Heart right ventricle (tissue), 16 donors: ENCODE measurements at regions of chr2 and their contacts with region 1.

Region 1: DNA sequence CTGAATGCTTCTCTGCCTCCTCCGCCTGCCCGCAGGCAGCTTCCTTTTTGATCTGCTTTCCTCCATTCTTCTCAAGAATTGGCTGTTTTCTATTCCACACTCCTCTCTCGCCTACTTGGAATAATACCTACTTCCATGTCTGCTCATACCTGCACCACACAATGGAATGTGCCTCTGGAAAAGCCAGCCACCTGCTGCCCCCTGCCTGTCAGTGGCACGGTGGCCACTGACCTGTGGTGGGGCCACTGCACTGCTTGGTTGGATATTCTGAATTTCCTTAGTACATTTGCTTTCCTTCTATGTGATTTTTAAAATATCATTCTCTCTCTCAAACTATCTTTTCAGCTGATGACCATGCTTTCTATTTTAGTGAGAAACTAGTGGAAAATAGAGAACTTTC is 406.9 kb downstream of the DCDC2C start:
- DNase-seq: no peak
- ATAC-seq: no peak
- H3K4me3 ChIP-seq: no peak overlapping the region
- H3K27ac ChIP-seq: no peak overlapping the region
- H3K4me1 ChIP-seq: no peaks in the 10 kb centered on the region
- H3K27me3 ChIP-seq: no peaks in the 10 kb centered on the region
- CTCF ChIP-seq: no peak

Region 2: DNA sequence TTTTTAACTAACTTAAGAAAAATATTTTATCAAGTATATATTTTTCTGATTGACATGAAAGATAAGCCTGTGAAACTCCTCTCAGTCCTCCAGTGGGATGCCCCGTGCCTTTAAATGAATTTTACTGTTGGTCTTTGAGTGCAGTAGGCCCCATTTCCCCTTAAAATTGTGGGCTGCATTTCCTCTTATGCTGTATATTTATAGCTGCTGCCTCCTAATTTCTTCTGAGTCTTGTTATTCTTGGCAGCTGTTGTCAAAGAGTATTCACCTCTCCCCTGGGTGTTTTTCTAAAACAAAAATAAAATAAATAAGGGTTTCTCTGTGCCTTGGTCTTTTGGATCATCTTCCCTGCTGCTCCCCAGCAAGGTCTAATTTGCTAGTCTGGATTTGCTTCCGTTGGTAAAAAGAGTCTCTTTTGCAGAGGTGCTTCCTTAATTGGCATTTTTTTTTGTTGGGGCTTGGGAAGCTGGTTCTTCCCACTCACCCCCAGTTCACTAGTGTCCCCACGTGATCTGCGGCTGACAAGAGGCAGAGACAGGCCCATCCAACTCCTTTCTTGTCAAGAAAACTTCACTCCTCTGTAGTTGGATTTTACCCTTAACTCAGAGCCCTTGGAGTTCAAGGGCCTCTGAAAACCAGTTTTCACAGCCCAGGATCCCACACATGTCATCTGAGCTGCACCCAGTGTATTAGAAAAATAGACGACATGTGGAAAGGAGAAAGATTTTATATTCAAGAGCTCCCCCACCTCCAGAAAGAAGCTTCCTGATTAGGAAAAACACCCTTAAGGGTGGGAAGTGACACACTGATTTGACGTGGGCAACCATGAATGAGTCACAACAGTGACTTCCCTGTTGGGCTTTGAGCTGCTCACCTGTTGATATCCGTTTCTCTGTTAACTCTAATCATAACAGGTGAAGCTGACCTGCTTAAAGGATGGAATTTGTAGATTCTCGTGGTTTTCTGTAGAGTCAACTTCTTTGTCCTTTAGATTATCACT is 24.6 kb after region 1 on chr2:
- intact Hi-C with region 1: loop called in 1 of 10 experiments (anchors 2 kb)
- DNase-seq: no peak
- ATAC-seq: no peak
- H3K4me3 ChIP-seq: no peak overlapping the region
- H3K27ac ChIP-seq: no peak overlapping the region
- H3K4me1 ChIP-seq: peaks cover 0 to 3% (median 0%) of the 10 kb centered on the region in 9 donors
- H3K27me3 ChIP-seq: no peaks in the 10 kb centered on the region
- CTCF ChIP-seq: no peak

Region 3: GRCh38 chr2:4151521-4151920 is 41.2 kb after region 1 on chr2:
- intact Hi-C with region 1: no loop called
- DNase-seq: no peak
- ATAC-seq: no peak
- H3K4me3 ChIP-seq: no peak overlapping the region
- H3K27ac ChIP-seq: no peak overlapping the region
- H3K4me1 ChIP-seq: no peaks in the 10 kb centered on the region
- H3K27me3 ChIP-seq: no peaks in the 10 kb centered on the region
- CTCF ChIP-seq: no peak

Region 4: DNA sequence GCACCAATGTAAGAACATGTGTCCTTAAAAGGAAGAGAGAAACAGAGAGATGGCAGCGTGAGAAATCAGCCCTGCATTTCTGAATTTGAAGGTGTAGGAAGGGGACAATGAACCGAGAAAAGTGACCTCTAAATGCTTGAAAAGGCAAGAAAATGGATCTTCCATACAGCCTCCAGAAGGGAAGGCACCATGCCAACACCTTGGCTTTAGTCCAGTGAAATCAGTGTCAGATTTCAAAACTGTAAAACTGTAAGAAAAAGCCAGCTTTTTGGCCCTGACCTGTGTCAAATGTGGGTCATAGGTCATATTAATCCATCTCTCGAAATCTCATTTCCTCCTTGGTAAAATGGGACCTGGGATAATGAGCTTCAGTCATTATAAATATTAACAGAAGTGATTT is 355.4 kb after region 1 on chr2:
- intact Hi-C with region 1: no loop called
- DNase-seq: no peak
- ATAC-seq: no peak
- H3K4me3 ChIP-seq: no peak overlapping the region
- H3K27ac ChIP-seq: no peak overlapping the region
- H3K4me1 ChIP-seq: no peaks in the 10 kb centered on the region
- H3K27me3 ChIP-seq: no peaks in the 10 kb centered on the region
- CTCF ChIP-seq: no peak